H1 (cell line): ENCODE measurements at regions of chr1 and their contacts with region 1.

Region 1: GRCh38 chr1:23691499-23692307 is at the start of gene RPL11:
- DNase-seq: peak; percentile 84 to 88
- H3K4me3 ChIP-seq: peak within 1 kb of the TSS; percentile 82 to 100 (median 92)
- H3K27ac ChIP-seq: peak within 1 kb of the TSS; percentile 93
- H3K4me1 ChIP-seq: peaks cover 0 to 13% (median 6%) of the 10 kb centered on the region in 4 experiments; a peak in 4 of 7 replicates
- H3K27me3 ChIP-seq: no peaks in the 10 kb centered on the region
- CTCF ChIP-seq: peak; percentile 67 to 77 (median 76)
- EP300 ChIP-seq: no peak
- POLR2A ChIP-seq: peak; percentile 97 to 99
- RAD21 ChIP-seq: no peak
- total RNA-seq, gene RPL11: 1,426 and 1,499 TPM in 2 replicates

Region 2: GRCh38 chr1:23634842-23635651 is 56.7 kb before region 1 on chr1:
- CTCF ChIA-PET with region 1: interaction called, 8 read pairs
- POLR2A ChIA-PET with region 1: interaction called, 10 read pairs
- DNase-seq: peak in 1 of 2 experiments; percentile 71
- H3K4me3 ChIP-seq: no peak overlapping the region
- H3K27ac ChIP-seq: no peak overlapping the region
- H3K4me1 ChIP-seq: peaks cover 0 to 17% (median under 1%) of the 10 kb centered on the region in 4 experiments; a peak in 5 of 7 replicates
- H3K27me3 ChIP-seq: no peaks in the 10 kb centered on the region
- CTCF ChIP-seq: peak; percentile 60 to 97 (median 74)
- EP300 ChIP-seq: no peak
- POLR2A ChIP-seq: no peak
- RAD21 ChIP-seq: peak; percentile 74 to 85

Region 3: GRCh38 chr1:23664837-23665795 is 26.6 kb before region 1 on chr1:
- CTCF ChIA-PET with region 1: interaction called, 8 read pairs
- POLR2A ChIA-PET with region 1: interaction called, 19 read pairs
- DNase-seq: no peak
- H3K4me3 ChIP-seq: no peak overlapping the region
- H3K27ac ChIP-seq: no peak overlapping the region
- H3K4me1 ChIP-seq: no peaks in the 10 kb centered on the region
- H3K27me3 ChIP-seq: no peaks in the 10 kb centered on the region
- CTCF ChIP-seq: peak; percentile 1 to 60 (median 53)
- EP300 ChIP-seq: no peak
- POLR2A ChIP-seq: no peak
- RAD21 ChIP-seq: peak; percentile 64 to 68

Region 4: DNA sequence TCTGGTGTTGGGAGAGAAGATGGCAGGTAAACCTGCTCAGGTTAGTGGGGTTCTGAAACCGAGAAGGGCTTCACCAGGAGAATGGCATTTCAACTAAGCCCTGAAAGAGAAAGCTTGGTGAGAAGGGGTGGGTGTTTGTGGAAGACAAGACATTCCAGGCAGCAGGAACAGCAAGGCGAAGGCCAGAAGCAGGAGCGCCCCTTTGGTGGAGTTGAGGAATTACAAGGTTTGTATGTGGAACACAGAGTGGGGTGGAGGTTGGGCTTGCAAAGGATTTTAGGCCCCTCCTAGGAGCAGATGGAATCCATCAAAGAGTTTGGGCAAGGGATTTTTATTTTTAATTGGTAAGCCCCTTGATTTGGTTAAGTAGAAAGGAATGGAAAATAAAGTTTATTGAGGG is 26.8 kb after region 1 on chr1:
- CTCF ChIA-PET with region 1: interaction called, 7 read pairs
- POLR2A ChIA-PET with region 1: interaction called, 90 read pairs
- DNase-seq: peak; percentile 59 to 75
- H3K4me3 ChIP-seq: no peak overlapping the region
- H3K27ac ChIP-seq: no peak overlapping the region
- H3K4me1 ChIP-seq: no peaks in the 10 kb centered on the region
- H3K27me3 ChIP-seq: no peaks in the 10 kb centered on the region
- CTCF ChIP-seq: peak; percentile 72 to 97 (median 84)
- EP300 ChIP-seq: peak in 1 of 2 experiments; percentile 15; a peak in 1 of 3 replicates
- POLR2A ChIP-seq: no peak
- RAD21 ChIP-seq: peak; percentile 46 to 61

Region 5: DNA sequence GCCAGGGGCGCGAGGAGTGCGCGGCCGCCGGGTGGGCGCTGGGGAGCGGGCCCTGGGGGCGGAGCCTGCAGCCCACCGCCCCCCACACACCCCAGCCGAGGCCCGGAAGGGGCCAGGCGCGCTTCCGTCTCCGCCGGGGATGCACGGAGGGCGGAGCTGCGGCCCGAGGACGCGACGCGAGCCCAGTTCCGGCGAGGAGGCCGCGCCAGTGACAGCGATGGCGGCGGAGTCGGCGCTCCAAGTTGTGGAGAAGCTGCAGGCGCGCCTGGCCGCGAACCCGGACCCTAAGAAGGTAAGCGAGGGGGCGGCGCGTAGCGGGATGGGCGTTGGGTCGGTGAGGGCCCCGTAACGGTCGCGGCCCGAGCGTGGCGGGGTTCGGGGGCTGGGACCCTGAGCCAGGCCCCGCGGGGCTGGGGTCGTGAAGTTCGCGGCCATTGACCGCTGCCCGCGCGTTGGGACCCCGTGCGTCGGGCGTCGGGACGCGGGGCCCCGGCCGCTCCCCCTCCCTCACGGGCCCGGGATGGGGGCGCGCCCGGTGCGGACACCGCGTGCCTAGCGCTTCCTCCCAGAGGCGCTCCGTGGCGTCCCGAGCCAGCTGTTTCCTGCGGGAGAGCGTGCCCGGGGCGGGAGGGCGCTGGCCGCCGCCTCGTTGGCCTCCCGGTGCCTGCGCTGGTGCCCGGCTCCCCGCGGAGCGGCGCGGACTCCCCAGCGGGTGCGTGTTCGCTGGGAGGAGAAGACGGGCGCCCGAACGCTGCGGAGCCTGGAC is 51.8 kb after region 1 on chr1 and contains the start of gene ELOA:
- CTCF ChIA-PET with region 1: interaction called, 8 read pairs
- POLR2A ChIA-PET with region 1: interaction called, 190 read pairs
- DNase-seq: peak; percentile 23 to 85
- H3K4me3 ChIP-seq: peak within 1 kb of the TSS; percentile 79 to 88 (median 84)
- H3K27ac ChIP-seq: peak within 1 kb of the TSS; percentile 61; the same call in 1 of the 2 replicates
- H3K4me1 ChIP-seq: peaks cover 3 to 10% (median 3%) of the 10 kb centered on the region in 4 experiments; a peak in 4 of 7 replicates
- H3K27me3 ChIP-seq: no peaks in the 10 kb centered on the region
- CTCF ChIP-seq: no peak
- EP300 ChIP-seq: no peak
- POLR2A ChIP-seq: peak; percentile 72 to 74; a peak in 2 of 3 replicates
- RAD21 ChIP-seq: no peak
- total RNA-seq, gene ELOA: 56.9 and 61.1 TPM in 2 replicates